ENCODE measurements at regions of chr9 and their contacts with region 1.

Region 1: GRCh38 chr9:131608493-131609037 is 63.2 kb downstream of the PRRT1B start:
- DNase-seq: peak; percentile 69
- ATAC-seq: peak; percentile 66

Region 2: GRCh38 chr9:131678499-131679111 is 70.0 kb after region 1 on chr9:
- intact Hi-C with region 1: loop called (anchors 5 kb)
- DNase-seq: peak; percentile 83
- ATAC-seq: peak; percentile 97

Region 3: DNA sequence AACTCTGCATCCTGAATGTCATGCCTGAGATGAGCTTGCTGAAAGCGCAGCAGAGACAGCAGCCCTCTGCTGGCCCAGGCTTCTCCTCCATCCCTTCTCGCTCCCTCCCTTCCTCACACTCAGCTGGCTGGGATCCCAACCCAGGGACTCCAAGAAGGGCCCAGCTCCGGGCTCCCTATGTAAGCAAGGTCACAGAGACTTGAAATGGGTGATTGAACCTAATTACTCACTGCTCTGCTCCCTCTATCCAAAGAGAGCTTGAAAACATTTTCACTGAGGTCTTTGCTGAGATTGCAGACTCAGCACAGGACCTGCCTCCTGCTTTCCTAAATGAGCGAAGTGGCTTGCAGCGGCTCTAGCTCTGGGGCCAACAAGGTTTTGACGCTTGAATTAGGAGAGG is 88.5 kb after region 1 on chr9:
- intact Hi-C with region 1: no loop called
- DNase-seq: peak; percentile 77
- ATAC-seq: peak; percentile 71

Region 4: DNA sequence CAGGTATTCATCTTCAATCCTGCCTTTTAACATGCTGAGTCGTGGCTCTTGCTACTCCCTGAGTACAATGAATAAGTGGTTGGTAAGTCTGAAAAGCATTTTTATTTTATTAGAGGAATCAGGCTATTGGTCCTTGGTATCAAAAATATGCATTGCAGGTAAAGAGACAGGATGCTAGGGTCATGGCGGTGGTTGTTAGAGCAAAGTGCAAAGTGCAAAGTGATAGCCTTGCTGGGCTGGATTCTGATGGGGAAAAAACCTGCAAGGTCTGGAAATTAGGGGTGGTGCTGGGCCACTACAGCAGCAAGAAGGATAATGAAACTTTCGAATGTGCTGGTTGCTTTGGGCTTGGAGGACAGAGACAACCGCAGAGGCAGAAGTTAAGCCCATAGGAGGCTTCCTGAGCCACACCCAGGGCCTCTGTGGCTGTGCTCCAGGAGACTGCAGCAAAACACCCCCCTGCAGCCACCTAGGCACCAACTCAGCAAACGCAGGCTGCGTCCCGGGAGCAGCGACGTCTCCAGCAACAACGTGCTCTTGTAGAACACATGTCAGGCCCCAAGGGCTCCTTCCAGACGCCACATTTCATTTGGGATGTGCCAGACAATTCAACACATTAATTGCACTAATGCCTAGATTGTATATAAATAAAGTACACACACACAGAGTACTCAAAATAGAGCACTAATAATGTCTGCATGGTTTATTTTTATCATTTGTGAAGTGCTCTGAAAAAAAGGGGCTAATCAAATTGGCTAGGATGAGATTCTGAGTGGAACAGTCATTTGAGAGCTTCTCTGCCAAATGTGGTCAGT is 281.1 kb after region 1 on chr9:
- intact Hi-C with region 1: loop called (anchors 5 kb)
- DNase-seq: no peak
- ATAC-seq: peak; percentile 75

Measured in Right ventricle myocardium inferior (tissue), 1 donor.